Transverse colon (tissue), 4 donors: ENCODE measurements at regions of chr1 and their contacts with region 1.

Region 1: DNA sequence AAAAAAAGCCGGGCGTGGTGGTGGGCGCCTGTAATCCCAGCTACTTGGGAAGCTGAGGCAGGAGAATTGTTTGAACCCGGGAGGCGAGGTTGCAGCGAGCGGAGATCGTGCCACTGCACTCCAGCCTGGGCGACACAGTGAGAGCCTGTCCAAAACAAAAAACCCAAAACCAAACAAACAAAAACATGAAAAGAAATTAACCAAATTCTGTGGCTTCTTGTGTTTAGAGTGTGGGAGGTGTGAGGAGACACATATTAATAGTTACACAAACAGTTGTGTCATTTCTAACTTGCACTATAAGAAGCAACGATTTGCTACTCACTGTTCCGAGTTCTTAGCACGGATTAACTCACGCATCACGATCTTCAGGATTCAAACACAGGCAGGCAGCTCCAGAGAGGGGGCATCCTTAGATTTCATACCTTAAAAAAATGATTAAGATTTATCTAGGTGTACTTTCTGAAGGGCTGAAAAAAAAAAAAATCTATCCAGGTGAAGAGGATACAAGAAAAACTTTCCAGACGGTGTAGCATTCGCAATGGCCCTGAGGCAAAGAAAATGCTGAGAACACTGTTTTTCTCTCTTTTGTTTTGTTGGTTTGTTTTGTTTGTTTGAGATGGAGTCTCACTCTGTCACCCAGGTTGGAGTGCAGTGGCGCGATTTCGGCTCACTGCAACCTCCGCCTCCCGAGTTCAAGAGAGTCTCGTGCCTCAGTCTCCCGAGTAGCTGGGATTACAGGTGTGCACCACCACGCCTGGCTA is 713 bp upstream of the HMGCL start:
- DNase-seq: no peak
- H3K4me3 ChIP-seq: peak overlapping the region; percentile 19 to 91 (median 90)
- H3K27ac ChIP-seq: peak overlapping the region; percentile 90 to 96 (median 93)
- H3K4me1 ChIP-seq: peaks cover 0 to 14% (median 7%) of the 10 kb centered on the region in 4 donors
- H3K27me3 ChIP-seq: no peaks in the 10 kb centered on the region
- CTCF ChIP-seq: no peak
- EP300 ChIP-seq: no peak
- POLR2A ChIP-seq: no peak

Region 2: DNA sequence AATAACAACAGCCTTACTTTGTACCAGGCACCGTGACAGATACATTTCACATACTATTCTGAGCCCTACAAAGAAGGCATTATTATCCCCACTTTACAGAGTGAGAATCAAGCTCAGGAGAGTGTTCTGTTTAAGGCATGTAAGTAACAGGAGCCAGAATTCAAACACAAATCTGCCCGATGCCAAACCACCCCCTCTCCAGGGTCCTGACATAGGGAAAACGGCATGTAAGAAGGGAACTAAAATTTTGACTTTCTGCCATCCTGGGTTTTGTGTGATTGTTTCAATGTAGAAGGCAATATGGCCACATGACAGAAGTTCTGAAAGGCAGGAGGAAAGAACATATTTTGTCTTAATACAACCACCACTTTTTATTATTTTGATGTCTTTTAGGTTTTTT is 36.7 kb after region 1 on chr1:
- in situ Hi-C with region 1: no loop called
- intact Hi-C with region 1: loop called (anchors 1 kb)
- DNase-seq: no peak
- H3K4me3 ChIP-seq: no peak overlapping the region
- H3K27ac ChIP-seq: no peak overlapping the region
- H3K4me1 ChIP-seq: peaks cover 2 to 22% (median 19%) of the 10 kb centered on the region in 4 donors
- H3K27me3 ChIP-seq: no peaks in the 10 kb centered on the region
- CTCF ChIP-seq: no peak
- EP300 ChIP-seq: no peak
- POLR2A ChIP-seq: no peak